Caco-2 (cell line): ENCODE measurements at regions of chr2 and their contacts with region 1.

Region 1: GRCh38 chr2:85132834-85133637 is at the start of gene TCF7L1:
- DNase-seq: peak; percentile 84 to 94
- H3K4me3 ChIP-seq: peak within 1 kb of the TSS; percentile 95
- H3K4me3 Mint-ChIP-seq: peak within 1 kb of the TSS; percentile 95
- H3K27ac Mint-ChIP-seq: peak within 1 kb of the TSS; percentile 79
- H3K4me1 ChIP-seq: peaks cover 21% of the 10 kb centered on the region
- H3K4me1 Mint-ChIP-seq: no peaks in the 10 kb centered on the region
- H3K27me3 ChIP-seq: no peaks in the 10 kb centered on the region
- H3K27me3 Mint-ChIP-seq: no peaks in the 10 kb centered on the region
- CTCF ChIP-seq: peak; percentile 93 to 97
- total RNA-seq, gene TCF7L1: 27.7 and 29.0 TPM in 2 replicates

Region 2: DNA sequence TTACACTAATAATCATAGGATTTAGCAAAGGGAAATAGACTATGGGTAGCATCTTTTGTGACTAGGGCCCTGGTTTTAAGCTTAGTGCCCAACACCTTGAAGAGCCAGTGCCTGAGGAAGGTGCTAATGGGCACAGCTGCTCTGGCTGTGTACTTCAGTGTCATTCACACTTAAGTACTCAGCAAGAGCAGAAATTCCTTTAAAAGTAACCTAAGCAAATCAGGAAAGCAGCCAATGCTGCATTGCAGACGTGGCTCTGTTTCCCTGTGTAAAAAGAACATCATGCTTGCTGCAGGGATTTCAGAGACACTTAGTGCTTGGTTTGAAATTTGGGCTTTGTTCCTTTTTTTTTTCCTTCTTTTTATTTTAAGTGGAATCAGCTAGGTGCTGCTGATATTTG is 1179.3 kb before region 1 on chr2:
- CTCF ChIA-PET with region 1: no interaction called
- POLR2A ChIA-PET with region 1: no interaction called
- intact Hi-C with region 1: no loop called
- DNase-seq: no peak
- H3K4me3 ChIP-seq: no peak overlapping the region
- H3K4me3 Mint-ChIP-seq: no peak overlapping the region
- H3K27ac Mint-ChIP-seq: no peak overlapping the region
- H3K4me1 ChIP-seq: no peaks in the 10 kb centered on the region
- H3K4me1 Mint-ChIP-seq: peaks cover 7% of the 10 kb centered on the region
- H3K27me3 ChIP-seq: no peaks in the 10 kb centered on the region
- H3K27me3 Mint-ChIP-seq: peaks cover 3% of the 10 kb centered on the region
- CTCF ChIP-seq: no peak

Region 3: GRCh38 chr2:85066874-85067351 is 66.1 kb before region 1 on chr2:
- CTCF ChIA-PET with region 1: interaction called, 10 read pairs
- POLR2A ChIA-PET with region 1: no interaction called
- intact Hi-C with region 1: loop called (anchors 1 kb)
- DNase-seq: peak; percentile 83 to 85
- H3K4me3 ChIP-seq: peak overlapping the region; percentile 30
- H3K4me3 Mint-ChIP-seq: peak overlapping the region; percentile 67
- H3K27ac Mint-ChIP-seq: no peak overlapping the region
- H3K4me1 ChIP-seq: 0 out of 2 replicates have a peak, but pooled peaks cover 5% of the 10 kb centered on the region
- H3K4me1 Mint-ChIP-seq: no peaks in the 10 kb centered on the region
- H3K27me3 ChIP-seq: no peaks in the 10 kb centered on the region
- H3K27me3 Mint-ChIP-seq: peaks cover 2% of the 10 kb centered on the region
- CTCF ChIP-seq: peak; percentile 88 to 91

Region 4: GRCh38 chr2:85188852-85189587 is 56.0 kb after region 1 on chr2:
- CTCF ChIA-PET with region 1: no interaction called
- POLR2A ChIA-PET with region 1: no interaction called
- intact Hi-C with region 1: loop called (anchors 1 kb)
- DNase-seq: peak in 1 of 2 experiments; percentile 32
- H3K4me3 ChIP-seq: no peak overlapping the region
- H3K4me3 Mint-ChIP-seq: no peak overlapping the region
- H3K27ac Mint-ChIP-seq: no peak overlapping the region
- H3K4me1 ChIP-seq: peaks cover 48% of the 10 kb centered on the region
- H3K4me1 Mint-ChIP-seq: peaks cover 29% of the 10 kb centered on the region
- H3K27me3 ChIP-seq: no peaks in the 10 kb centered on the region
- H3K27me3 Mint-ChIP-seq: no peaks in the 10 kb centered on the region
- CTCF ChIP-seq: no peak

Region 5: GRCh38 chr2:85255813-85256594 is 123.0 kb after region 1 on chr2:
- CTCF ChIA-PET with region 1: interaction called, 8 read pairs
- POLR2A ChIA-PET with region 1: interaction called, 11 read pairs
- intact Hi-C with region 1: loop called (anchors 1 kb)
- DNase-seq: peak; percentile 92 to 95
- H3K4me3 ChIP-seq: peak overlapping the region; percentile 29
- H3K4me3 Mint-ChIP-seq: peak overlapping the region; percentile 83
- H3K27ac Mint-ChIP-seq: peak overlapping the region; percentile 97
- H3K4me1 ChIP-seq: peaks cover 78% of the 10 kb centered on the region
- H3K4me1 Mint-ChIP-seq: peaks cover 80% of the 10 kb centered on the region
- H3K27me3 ChIP-seq: no peaks in the 10 kb centered on the region
- H3K27me3 Mint-ChIP-seq: no peaks in the 10 kb centered on the region
- CTCF ChIP-seq: no peak

Region 6: DNA sequence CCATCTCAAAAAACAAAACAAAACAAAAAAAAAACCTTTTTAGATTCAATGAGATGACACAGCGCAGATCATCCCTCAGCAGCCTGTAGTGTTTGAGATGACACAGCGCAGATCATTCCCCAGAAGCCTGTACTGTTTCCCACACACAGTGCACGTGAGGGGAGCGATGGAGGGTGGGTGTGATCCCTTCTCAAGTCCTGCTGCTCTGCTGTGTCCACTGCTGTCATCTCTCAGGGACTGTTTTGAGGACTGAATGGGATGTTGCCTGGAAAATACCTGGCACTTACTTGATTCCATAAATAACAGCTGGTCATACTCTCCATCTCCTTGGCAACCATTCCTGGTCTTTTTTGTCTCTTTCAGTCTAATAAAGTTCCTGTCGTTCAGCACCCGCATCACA is 169.1 kb after region 1 on chr2:
- CTCF ChIA-PET with region 1: interaction called, 8 read pairs
- POLR2A ChIA-PET with region 1: no interaction called
- intact Hi-C with region 1: loop called (anchors 1 kb)
- DNase-seq: no peak
- H3K4me3 ChIP-seq: no peak overlapping the region
- H3K4me3 Mint-ChIP-seq: no peak overlapping the region
- H3K27ac Mint-ChIP-seq: no peak overlapping the region
- H3K4me1 ChIP-seq: peaks cover 6% of the 10 kb centered on the region
- H3K4me1 Mint-ChIP-seq: peaks cover 9% of the 10 kb centered on the region
- H3K27me3 ChIP-seq: no peaks in the 10 kb centered on the region
- H3K27me3 Mint-ChIP-seq: no peaks in the 10 kb centered on the region
- CTCF ChIP-seq: no peak